ENCODE measurements at regions of chr19 and their contacts with region 1.

Region 1: GRCh38 chr19:39341719-39342604 is at the start of gene SAMD4B:
- ATAC-seq: peak; percentile 85 to 92 (median 90)
- H3K4me3 ChIP-seq: peak within 1 kb of the TSS; percentile 64 to 99 (median 91)
- H3K27ac ChIP-seq: peak within 1 kb of the TSS; percentile 80 to 83
- H3K4me1 ChIP-seq: peaks cover 11% of the 10 kb centered on the region in 2 donors
- total RNA-seq, gene SAMD4B: 24.1 to 124 (median 64.9) TPM

Region 2: GRCh38 chr19:38949580-38950367 is 392.2 kb before region 1 on chr19:
- in situ Hi-C with region 1: loop called in 4 of 9 experiments (anchors 25 kb)
- ATAC-seq: peak; percentile 22 to 92 (median 78)
- H3K4me3 ChIP-seq: peak overlapping the region; percentile 10 to 33 (median 26)
- H3K27ac ChIP-seq: peak overlapping the region in 1 of 2 donors; percentile 48
- H3K4me1 ChIP-seq: peaks cover 0 to 5% of the 10 kb centered on the region in 2 donors

Region 3: DNA sequence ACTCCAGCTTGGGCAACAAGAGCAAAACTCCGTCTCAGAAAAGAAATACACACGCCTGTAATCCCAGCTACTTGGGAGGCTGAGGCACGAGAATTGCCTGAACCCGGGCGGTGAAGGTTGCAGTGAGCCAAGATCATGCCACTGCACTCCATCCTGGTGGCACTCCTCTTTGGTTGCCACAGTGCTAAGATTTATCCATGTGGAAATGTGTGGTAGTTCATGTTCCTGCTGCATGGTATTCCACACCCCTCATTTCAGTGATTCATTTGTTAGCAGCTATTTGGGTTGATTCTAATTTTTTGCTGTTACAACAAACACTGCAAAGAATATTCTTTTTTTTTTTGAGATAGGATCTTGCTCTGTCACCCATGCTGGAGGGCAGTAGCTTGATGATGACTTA is 109.3 kb before region 1 on chr19:
- in situ Hi-C with region 1: no loop called
- ATAC-seq: no peak
- H3K4me3 ChIP-seq: no peak overlapping the region
- H3K27ac ChIP-seq: no peak overlapping the region
- H3K4me1 ChIP-seq: no peaks in the 10 kb centered on the region

Region 4: DNA sequence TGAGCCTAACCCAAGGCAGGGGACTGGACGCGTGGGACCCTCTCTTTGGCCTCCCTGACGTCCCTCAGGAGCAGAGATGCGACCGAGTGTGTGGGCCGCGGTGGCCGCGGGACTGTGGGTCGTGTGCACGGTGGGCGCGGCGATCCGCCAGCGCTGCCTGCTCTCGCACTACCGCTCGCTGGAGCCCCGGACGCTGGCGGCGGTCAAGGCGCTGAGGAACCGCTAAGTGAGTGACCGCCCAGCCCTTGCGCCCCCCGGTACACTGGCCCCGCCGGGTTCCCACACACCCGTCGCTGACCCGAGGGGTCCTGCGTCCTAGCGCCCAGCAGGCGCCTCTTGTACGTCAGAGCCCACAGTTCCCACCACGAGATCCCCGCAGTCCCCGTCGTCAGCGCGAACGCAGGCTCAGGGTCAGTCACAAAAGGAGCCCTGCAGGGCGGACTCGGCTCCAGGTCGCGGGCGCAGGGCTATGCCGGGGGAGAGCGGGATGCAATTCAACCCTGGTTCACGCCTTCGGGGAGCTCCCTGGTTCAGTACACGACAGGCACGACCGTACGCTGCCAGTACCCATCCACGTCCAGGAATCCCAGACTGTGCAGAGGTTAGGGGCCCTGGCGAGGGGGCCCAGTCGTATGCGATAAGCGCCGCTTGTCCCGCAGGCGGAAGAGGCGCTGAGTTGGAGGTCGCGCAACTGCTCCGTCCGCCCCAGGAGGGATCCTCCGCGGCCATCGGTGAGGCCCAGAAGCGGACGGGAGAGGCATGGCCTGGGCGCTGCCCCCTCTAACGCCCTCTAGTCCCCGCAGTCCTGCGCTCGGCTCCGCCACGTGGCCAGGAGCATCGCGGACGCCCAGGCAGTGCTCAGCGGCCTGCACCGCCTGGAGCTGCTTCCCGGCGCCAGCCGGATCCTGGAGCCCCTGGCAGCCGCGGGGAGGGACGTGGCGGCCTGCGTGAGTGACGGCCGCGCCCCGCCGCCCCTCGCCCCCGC is 77.4 kb before region 1 on chr19:
- in situ Hi-C with region 1: no loop called
- ATAC-seq: peak; percentile 18 to 93 (median 84)
- H3K4me3 ChIP-seq: no peak overlapping the region
- H3K27ac ChIP-seq: no peak overlapping the region
- H3K4me1 ChIP-seq: peaks cover 0 to 8% of the 10 kb centered on the region in 2 donors

Measured in motor neuron (in vitro differentiated cells).